ENCODE measurements at regions of chr11 and their contacts with region 1.

Region 1: GRCh38 chr11:76919887-76920746 is 59.4 kb downstream of the ACER3 start:
- DNase-seq: peak; percentile 67 to 71 (median 69)
- H3K4me3 ChIP-seq: no peak overlapping the region
- H3K4me3 Mint-ChIP-seq: peak overlapping the region in 1 of 2 donors; percentile 9
- H3K27ac ChIP-seq: no peak overlapping the region
- H3K27ac Mint-ChIP-seq: no peak overlapping the region
- H3K4me1 ChIP-seq: peaks cover 0 to 13% of the 10 kb centered on the region in 2 donors
- H3K4me1 Mint-ChIP-seq: peaks cover 10% of the 10 kb centered on the region
- H3K27me3 ChIP-seq: no peaks in the 10 kb centered on the region
- H3K27me3 Mint-ChIP-seq: peaks cover 0 to 1% (median 0%) of the 10 kb centered on the region in 3 donors
- CTCF ChIP-seq: peak; percentile 79

Region 2: GRCh38 chr11:76807206-76807875 is 112.8 kb before region 1 on chr11:
- intact Hi-C with region 1: loop called (anchors 2 to 5 kb)
- DNase-seq: peak; percentile 56 to 74 (median 72)
- H3K4me3 ChIP-seq: no peak overlapping the region
- H3K4me3 Mint-ChIP-seq: peak overlapping the region in 1 of 2 donors; percentile 63
- H3K27ac ChIP-seq: no peak overlapping the region
- H3K27ac Mint-ChIP-seq: peak overlapping the region in 1 of 7 donors; percentile 56
- H3K4me1 ChIP-seq: peaks cover 8 to 9% of the 10 kb centered on the region in 2 donors
- H3K4me1 Mint-ChIP-seq: peaks cover 12% of the 10 kb centered on the region
- H3K27me3 ChIP-seq: no peaks in the 10 kb centered on the region
- H3K27me3 Mint-ChIP-seq: peaks cover 7 to 39% (median 18%) of the 10 kb centered on the region in 3 donors
- CTCF ChIP-seq: peak; percentile 91

Region 3: GRCh38 chr11:76955459-76956114 is 35.5 kb after region 1 on chr11:
- intact Hi-C with region 1: no loop called
- DNase-seq: no peak
- H3K4me3 ChIP-seq: no peak overlapping the region
- H3K4me3 Mint-ChIP-seq: no peak overlapping the region
- H3K27ac ChIP-seq: no peak overlapping the region
- H3K27ac Mint-ChIP-seq: no peak overlapping the region
- H3K4me1 ChIP-seq: no peaks in the 10 kb centered on the region
- H3K4me1 Mint-ChIP-seq: peaks cover 8% of the 10 kb centered on the region
- H3K27me3 ChIP-seq: no peaks in the 10 kb centered on the region
- H3K27me3 Mint-ChIP-seq: peaks cover 0 to 2% (median 2%) of the 10 kb centered on the region in 3 donors
- CTCF ChIP-seq: no peak

Region 4: DNA sequence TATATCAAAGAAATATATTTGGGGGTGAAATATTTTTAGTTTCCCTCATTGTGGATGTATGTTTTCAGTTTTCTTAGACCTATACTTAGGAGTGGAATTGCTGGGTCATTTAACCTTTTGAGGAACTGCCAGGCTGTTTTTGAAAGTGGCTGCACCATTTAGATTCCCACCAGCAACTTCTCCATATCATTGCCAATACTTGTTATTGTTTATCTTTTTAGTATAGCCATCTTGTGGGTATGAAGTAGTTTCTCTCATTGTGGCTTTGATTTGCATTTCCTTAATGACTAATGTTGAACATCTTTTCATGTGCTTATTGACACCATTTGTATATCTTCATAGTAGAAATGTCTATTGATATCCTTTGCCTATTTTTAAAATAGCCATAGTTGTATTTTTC is 51.9 kb after region 1 on chr11:
- intact Hi-C with region 1: no loop called
- DNase-seq: no peak
- H3K4me3 ChIP-seq: no peak overlapping the region
- H3K4me3 Mint-ChIP-seq: no peak overlapping the region
- H3K27ac ChIP-seq: no peak overlapping the region
- H3K27ac Mint-ChIP-seq: no peak overlapping the region
- H3K4me1 ChIP-seq: no peaks in the 10 kb centered on the region
- H3K4me1 Mint-ChIP-seq: no peaks in the 10 kb centered on the region
- H3K27me3 ChIP-seq: no peaks in the 10 kb centered on the region
- H3K27me3 Mint-ChIP-seq: no peaks in the 10 kb centered on the region
- CTCF ChIP-seq: no peak

Measured in CD14-positive monocyte (primary cell).